K562 (cell line): ENCODE measurements at regions of chr2 and their contacts with region 1.

Region 1: GRCh38 chr2:102592597-102592996 is 26.8 kb upstream of the SLC9A2 start:
- DNase-seq: peak; percentile 15 to 21 (median 18)
- ATAC-seq: no peak
- H3K4me3 ChIP-seq: no peak overlapping the region
- H3K27ac ChIP-seq: no peak overlapping the region
- H3K4me1 ChIP-seq: no peaks in the 10 kb centered on the region
- H3K27me3 ChIP-seq: peaks cover 4% of the 10 kb centered on the region in 2 experiments; a peak in 1 of 5 replicates
- CTCF ChIP-seq: peak; percentile 36 to 49 (median 43); a peak in 4 of 6 replicates
- EP300 ChIP-seq: no peak
- POLR2A ChIP-seq: no peak
- RAD21 ChIP-seq: peak; percentile 37 to 69

Region 2: GRCh38 chr2:102473020-102473419 is 119.6 kb before region 1 on chr2 and contains the start of gene SLC9A4:
- CTCF ChIA-PET with region 1: no interaction called
- POLR2A ChIA-PET with region 1: no interaction called
- in situ Hi-C with region 1: no loop called
- intact Hi-C with region 1: loop called (anchors 2 kb)
- DNase-seq: peak; percentile 25 to 60 (median 53)
- ATAC-seq: peak; percentile 72
- H3K4me3 ChIP-seq: no peak within 1 kb of the TSS
- H3K27ac ChIP-seq: no peak within 1 kb of the TSS
- H3K4me1 ChIP-seq: no peaks in the 10 kb centered on the region
- H3K27me3 ChIP-seq: peaks cover 0 to 5% of the 10 kb centered on the region in 2 experiments; a peak in 2 of 5 replicates
- CTCF ChIP-seq: peak; percentile 59 to 82 (median 80)
- EP300 ChIP-seq: no peak
- POLR2A ChIP-seq: no peak
- RAD21 ChIP-seq: peak; percentile 68 to 80
- polyA plus RNA-seq, gene SLC9A4: 0.15 TPM in 1 of 2 experiments, not detected in the other

Region 3: DNA sequence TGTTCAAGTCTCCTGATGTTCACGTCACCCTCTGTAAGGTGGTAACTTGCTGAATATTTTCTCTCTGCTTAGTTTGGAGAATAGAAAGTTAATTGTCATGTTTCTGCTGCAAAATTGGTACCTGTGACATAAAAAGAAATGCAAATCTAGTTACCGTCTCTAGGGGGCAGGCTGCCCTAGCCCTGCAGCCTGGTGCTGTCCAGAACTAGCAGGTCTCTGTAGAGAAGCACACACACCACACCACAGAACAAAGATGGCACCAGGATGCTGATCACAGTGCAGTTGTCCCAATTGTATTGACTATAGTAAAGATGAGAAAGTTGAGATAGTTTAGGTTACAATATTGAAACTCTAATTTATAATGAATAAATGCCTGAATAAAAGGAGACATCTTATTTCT is 72.6 kb before region 1 on chr2:
- CTCF ChIA-PET with region 1: no interaction called
- POLR2A ChIA-PET with region 1: no interaction called
- in situ Hi-C with region 1: no loop called
- intact Hi-C with region 1: loop called (anchors 1 kb)
- DNase-seq: peak; percentile 24 to 70 (median 42)
- ATAC-seq: peak; percentile 92
- H3K4me3 ChIP-seq: no peak overlapping the region
- H3K27ac ChIP-seq: no peak overlapping the region
- H3K4me1 ChIP-seq: no peaks in the 10 kb centered on the region
- H3K27me3 ChIP-seq: peaks cover 5 to 9% of the 10 kb centered on the region in 2 experiments; a peak in 2 of 5 replicates
- CTCF ChIP-seq: peak; percentile 75 to 91 (median 84)
- EP300 ChIP-seq: no peak
- POLR2A ChIP-seq: no peak
- RAD21 ChIP-seq: peak; percentile 73 to 89